ENCODE measurements at regions of chr3 and their contacts with region 1.

Region 1: DNA sequence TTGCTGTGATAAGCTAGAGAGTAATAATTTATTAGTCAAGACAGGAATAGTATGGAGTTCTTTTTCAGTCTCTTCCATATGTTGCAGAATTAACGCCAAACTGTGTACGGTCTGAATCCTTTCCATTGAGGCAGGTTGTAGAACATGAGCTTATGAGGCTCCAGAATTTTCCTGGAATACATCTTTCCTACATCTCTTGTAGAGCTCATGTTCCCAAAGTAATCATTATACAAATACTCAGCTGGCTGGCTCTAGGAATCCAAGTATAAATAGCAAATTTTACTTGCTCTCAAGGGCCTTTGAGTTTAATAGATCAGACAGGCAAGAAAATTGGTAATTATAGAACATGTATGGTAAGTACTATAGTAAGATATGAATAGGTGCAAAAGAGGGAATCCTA is 419.4 kb downstream of the RBMS3 start:
- DNase-seq: no peak
- ATAC-seq: no peak
- H3K4me3 ChIP-seq: no peak overlapping the region
- H3K27ac ChIP-seq: no peak overlapping the region
- H3K4me1 ChIP-seq: no peaks in the 10 kb centered on the region
- H3K27me3 ChIP-seq: no peaks in the 10 kb centered on the region
- CTCF ChIP-seq: no peak
- EP300 ChIP-seq: no peak
- POLR2A ChIP-seq: no peak
- RAD21 ChIP-seq: no peak

Region 2: DNA sequence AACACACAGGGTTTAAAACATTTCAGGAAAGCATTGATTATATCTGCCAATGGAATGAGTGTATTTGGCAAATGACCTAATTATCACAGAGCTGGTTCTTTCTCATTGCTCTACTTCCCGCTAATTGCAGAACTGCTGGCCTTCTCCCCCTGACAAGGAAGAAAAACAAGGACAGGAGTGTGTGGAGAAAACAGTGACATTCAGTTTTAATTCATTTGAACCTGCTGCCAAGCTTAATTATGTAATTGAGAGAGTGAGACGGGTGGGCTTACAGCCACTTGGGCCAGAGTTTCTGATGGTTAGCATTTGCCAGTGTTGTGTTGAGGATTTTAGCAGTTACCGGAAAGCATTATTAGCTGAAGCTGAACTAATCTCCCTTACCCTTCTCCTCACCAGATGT is 118.0 kb before region 1 on chr3:
- CTCF ChIA-PET with region 1: no interaction called
- POLR2A ChIA-PET with region 1: no interaction called
- RAD21 ChIA-PET with region 1: no interaction called
- SMC1A ChIA-PET with region 1: no interaction called
- in situ Hi-C with region 1: no loop called
- intact Hi-C with region 1: no loop called
- DNase-seq: no peak
- ATAC-seq: no peak
- H3K4me3 ChIP-seq: no peak overlapping the region
- H3K27ac ChIP-seq: no peak overlapping the region
- H3K4me1 ChIP-seq: no peaks in the 10 kb centered on the region
- H3K27me3 ChIP-seq: no peaks in the 10 kb centered on the region
- CTCF ChIP-seq: no peak
- EP300 ChIP-seq: no peak
- POLR2A ChIP-seq: no peak
- RAD21 ChIP-seq: no peak

Region 3: GRCh38 chr3:29711255-29711771 is 11.1 kb after region 1 on chr3:
- CTCF ChIA-PET with region 1: interaction called, 11 read pairs
- POLR2A ChIA-PET with region 1: no interaction called
- RAD21 ChIA-PET with region 1: no interaction called
- SMC1A ChIA-PET with region 1: interaction called, 5 read pairs
- in situ Hi-C with region 1: no loop called
- intact Hi-C with region 1: no loop called
- DNase-seq: no peak
- ATAC-seq: no peak
- H3K4me3 ChIP-seq: no peak overlapping the region
- H3K27ac ChIP-seq: no peak overlapping the region
- H3K4me1 ChIP-seq: no peaks in the 10 kb centered on the region
- H3K27me3 ChIP-seq: no peaks in the 10 kb centered on the region
- CTCF ChIP-seq: no peak
- EP300 ChIP-seq: no peak
- POLR2A ChIP-seq: no peak
- RAD21 ChIP-seq: no peak